ENCODE measurements at regions of chr14 and their contacts with region 1.

Region 1: DNA sequence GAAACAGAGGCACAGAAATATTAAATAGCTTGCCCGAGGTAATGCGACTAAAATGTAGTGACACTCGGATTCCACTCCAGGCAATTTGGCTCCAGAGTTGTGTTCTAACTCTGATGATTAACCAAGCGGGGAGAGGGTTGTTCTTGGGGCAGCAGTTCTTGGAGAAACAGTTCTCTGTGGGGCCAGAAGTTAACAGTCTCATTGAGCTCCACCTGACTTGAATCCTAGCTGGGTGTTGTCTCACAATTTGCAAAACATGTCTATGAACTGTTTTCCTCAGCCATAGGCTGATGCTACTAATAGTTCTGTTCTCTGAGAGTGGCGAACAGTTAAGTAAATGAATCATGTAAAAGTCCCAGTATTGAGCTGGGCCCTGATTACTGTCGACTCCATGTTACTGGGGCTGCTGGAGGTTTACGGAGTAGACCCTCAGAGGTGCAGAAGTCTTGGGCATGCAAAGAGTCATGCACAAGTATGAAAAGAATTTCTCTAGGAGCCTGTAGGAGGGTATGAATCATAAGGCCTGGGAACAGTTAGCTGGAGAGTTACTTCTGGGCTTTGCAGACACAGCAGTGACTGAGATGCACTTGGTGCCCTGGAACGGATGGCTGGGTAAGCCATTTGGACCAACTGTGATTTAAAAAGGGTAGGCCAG is 15.4 kb upstream of the NIN start:
- DNase-seq: no peak
- ATAC-seq: no peak
- H3K4me3 ChIP-seq: no peak overlapping the region
- H3K4me3 Mint-ChIP-seq: no peak overlapping the region
- H3K27ac ChIP-seq: no peak overlapping the region
- H3K27ac Mint-ChIP-seq: no peak overlapping the region
- H3K4me1 ChIP-seq: no peaks in the 10 kb centered on the region
- H3K4me1 Mint-ChIP-seq: peaks cover 2 to 9% (median 3%) of the 10 kb centered on the region in 3 donors
- H3K27me3 ChIP-seq: no peaks in the 10 kb centered on the region
- H3K27me3 Mint-ChIP-seq: no peaks in the 10 kb centered on the region

Region 2: DNA sequence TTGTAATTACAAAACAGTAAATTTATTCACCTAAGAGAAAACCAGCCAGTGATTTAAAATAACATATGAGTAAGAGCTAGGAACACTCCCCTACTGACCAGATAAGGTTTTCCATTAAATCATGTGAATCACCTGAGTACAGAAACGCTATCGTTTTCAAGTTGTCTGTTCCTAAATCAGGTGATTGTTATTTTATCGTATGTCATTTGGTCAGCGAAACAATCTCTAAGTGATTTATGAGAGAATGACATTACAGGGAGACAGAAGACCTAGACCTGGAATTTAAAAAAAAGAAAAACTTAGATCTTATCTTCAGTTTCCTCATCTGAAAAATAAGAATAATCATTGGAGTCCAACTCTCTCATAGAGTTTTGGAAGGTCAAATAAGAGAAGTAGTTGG is 1307.4 kb before region 1 on chr14:
- CTCF ChIA-PET with region 1: interaction called in 1 of 2 experiments, 11 read pairs
- POLR2A ChIA-PET with region 1: no interaction called
- DNase-seq: no peak
- ATAC-seq: no peak
- H3K4me3 ChIP-seq: no peak overlapping the region
- H3K4me3 Mint-ChIP-seq: no peak overlapping the region
- H3K27ac ChIP-seq: no peak overlapping the region
- H3K27ac Mint-ChIP-seq: no peak overlapping the region
- H3K4me1 ChIP-seq: no peaks in the 10 kb centered on the region
- H3K4me1 Mint-ChIP-seq: no peaks in the 10 kb centered on the region
- H3K27me3 ChIP-seq: no peaks in the 10 kb centered on the region
- H3K27me3 Mint-ChIP-seq: no peaks in the 10 kb centered on the region